Activated CD4-positive, alpha-beta memory T cell treated with anti-CD3 and anti-CD28 coated beads for 36 hours (primary cell): ENCODE measurements at regions of chr17 and their contacts with region 1.

Region 1: GRCh38 chr17:32253117-32253611 is 12.5 kb upstream of the RHBDL3 start:
- DNase-seq: peak; percentile 84
- H3K4me3 Mint-ChIP-seq: no peak overlapping the region
- H3K27ac Mint-ChIP-seq: no peak overlapping the region
- H3K4me1 Mint-ChIP-seq: no peaks in the 10 kb centered on the region
- H3K27me3 Mint-ChIP-seq: peaks cover 5% of the 10 kb centered on the region

Region 2: DNA sequence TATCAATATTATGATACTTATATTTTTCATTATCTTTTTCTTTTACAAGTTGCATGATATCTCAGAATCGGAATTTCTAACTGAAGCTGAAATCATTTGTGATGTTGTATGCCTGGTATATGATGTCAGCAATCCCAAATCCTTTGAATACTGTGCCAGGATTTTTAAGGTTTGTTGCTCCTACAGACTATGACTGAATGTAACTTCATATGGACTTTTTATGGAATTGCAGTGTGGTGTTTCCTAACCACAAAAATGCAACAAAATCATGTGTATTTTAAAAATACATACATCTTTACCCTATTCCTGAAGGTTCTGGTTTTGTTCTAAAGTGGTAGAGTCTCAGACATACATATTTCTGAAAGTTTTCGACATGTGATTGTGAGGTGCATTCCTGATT is 46.3 kb before region 1 on chr17:
- CTCF ChIA-PET with region 1: no interaction called
- POLR2A ChIA-PET with region 1: no interaction called
- intact Hi-C with region 1: no loop called
- DNase-seq: no peak
- H3K4me3 Mint-ChIP-seq: no peak overlapping the region
- H3K27ac Mint-ChIP-seq: no peak overlapping the region
- H3K4me1 Mint-ChIP-seq: no peaks in the 10 kb centered on the region
- H3K27me3 Mint-ChIP-seq: no peaks in the 10 kb centered on the region

Region 3: GRCh38 chr17:32265192-32265923 is 12.2 kb after region 1 on chr17 and contains the start of gene RHBDL3:
- CTCF ChIA-PET with region 1: interaction called, 20 read pairs
- POLR2A ChIA-PET with region 1: no interaction called
- intact Hi-C with region 1: no loop called
- DNase-seq: no peak
- H3K4me3 Mint-ChIP-seq: peak within 1 kb of the TSS; percentile 58
- H3K27ac Mint-ChIP-seq: no peak within 1 kb of the TSS
- H3K4me1 Mint-ChIP-seq: peaks cover 14% of the 10 kb centered on the region
- H3K27me3 Mint-ChIP-seq: peaks cover 50% of the 10 kb centered on the region
- total RNA-seq, gene RHBDL3: 0.17 TPM in 1 of 2 experiments, not detected in the other

Region 4: GRCh38 chr17:32311028-32311536 is 57.9 kb after region 1 on chr17:
- CTCF ChIA-PET with region 1: interaction called, 10 read pairs
- POLR2A ChIA-PET with region 1: interaction called, 3 read pairs
- intact Hi-C with region 1: no loop called
- DNase-seq: no peak
- H3K4me3 Mint-ChIP-seq: no peak overlapping the region
- H3K27ac Mint-ChIP-seq: no peak overlapping the region
- H3K4me1 Mint-ChIP-seq: no peaks in the 10 kb centered on the region
- H3K27me3 Mint-ChIP-seq: peaks cover 3% of the 10 kb centered on the region

Region 5: DNA sequence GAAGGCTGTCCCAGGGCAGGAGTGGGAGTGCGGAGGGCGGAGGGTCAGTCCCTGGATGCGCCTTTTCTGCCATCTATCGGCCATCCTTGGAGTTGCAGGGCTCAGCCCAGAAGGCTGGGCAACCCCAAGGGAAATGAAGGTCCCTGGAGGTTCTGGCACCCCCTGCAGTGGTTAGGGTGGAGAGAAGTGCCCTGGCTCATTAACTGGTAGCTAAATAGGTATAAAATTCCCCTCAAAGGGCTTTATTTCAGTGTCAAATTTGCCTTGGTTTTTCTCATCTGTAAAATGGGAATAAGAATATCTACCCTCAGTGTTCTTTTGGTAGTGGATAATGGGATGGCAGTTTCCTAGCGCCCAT is 66.4 kb after region 1 on chr17:
- CTCF ChIA-PET with region 1: interaction called, 70 read pairs
- POLR2A ChIA-PET with region 1: interaction called, 3 read pairs
- intact Hi-C with region 1: loop called (anchors 1 kb)
- DNase-seq: peak; percentile 87
- H3K4me3 Mint-ChIP-seq: peak overlapping the region; percentile 51
- H3K27ac Mint-ChIP-seq: no peak overlapping the region
- H3K4me1 Mint-ChIP-seq: peaks cover 13% of the 10 kb centered on the region
- H3K27me3 Mint-ChIP-seq: peaks cover 8% of the 10 kb centered on the region

Region 6: DNA sequence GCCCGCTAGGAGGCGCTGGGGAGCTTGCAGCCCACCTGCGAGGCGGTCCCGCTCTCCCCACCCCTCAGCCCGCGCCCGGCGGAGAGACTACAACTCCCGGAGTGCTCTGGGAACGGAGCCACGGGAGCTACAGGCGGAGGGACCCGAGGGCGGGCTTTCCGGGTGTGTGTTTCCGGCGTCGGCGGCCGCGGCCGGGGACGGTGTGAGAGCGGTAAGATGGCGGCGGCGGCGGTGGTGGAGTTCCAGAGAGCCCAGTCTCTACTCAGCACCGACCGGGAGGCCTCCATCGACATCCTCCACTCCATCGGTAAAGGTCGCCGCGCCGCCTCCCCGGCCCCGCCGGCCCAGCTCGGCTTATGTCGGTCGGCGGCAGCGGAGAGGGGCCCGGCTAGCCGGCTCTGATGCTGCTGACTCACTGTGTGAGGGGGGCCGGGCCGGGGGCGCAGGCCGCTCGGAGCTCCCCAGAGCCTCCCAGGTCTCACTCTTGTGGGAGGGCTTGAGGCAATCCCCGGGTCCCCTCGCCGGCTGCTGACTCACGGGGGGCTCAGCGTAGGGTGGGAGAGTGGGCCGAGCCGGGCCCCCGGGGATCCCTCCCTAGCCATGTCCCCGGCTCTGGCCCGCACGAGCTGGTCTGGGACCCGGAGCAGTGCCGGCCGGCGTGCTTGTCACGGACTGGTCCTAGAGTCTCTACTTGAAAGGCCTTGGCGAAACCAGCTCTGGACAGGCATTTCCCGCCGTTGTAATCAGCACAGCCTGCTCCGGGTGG is 191.3 kb after region 1 on chr17 and contains the start of gene PSMD11:
- CTCF ChIA-PET with region 1: interaction called, 6 read pairs
- POLR2A ChIA-PET with region 1: no interaction called
- intact Hi-C with region 1: loop called (anchors 5 kb)
- DNase-seq: peak; percentile 99
- H3K4me3 Mint-ChIP-seq: peak within 1 kb of the TSS; percentile 89
- H3K27ac Mint-ChIP-seq: peak within 1 kb of the TSS; percentile 91
- H3K4me1 Mint-ChIP-seq: peaks cover 49% of the 10 kb centered on the region
- H3K27me3 Mint-ChIP-seq: no peaks in the 10 kb centered on the region
- total RNA-seq, gene PSMD11: 161 to 162 TPM